ENCODE measurements at regions of chr7 and their contacts with region 1.

Region 1: GRCh38 chr7:73578342-73579127 is at the start of gene TBL2:
- DNase-seq: peak; percentile 97
- H3K4me3 Mint-ChIP-seq: peak within 1 kb of the TSS; percentile 92
- H3K27ac Mint-ChIP-seq: peak within 1 kb of the TSS; percentile 97
- H3K4me1 Mint-ChIP-seq: peaks cover 15% of the 10 kb centered on the region
- H3K27me3 Mint-ChIP-seq: no peaks in the 10 kb centered on the region
- total RNA-seq, gene TBL2: 43.3 and 43.9 TPM in 2 replicates

Region 2: DNA sequence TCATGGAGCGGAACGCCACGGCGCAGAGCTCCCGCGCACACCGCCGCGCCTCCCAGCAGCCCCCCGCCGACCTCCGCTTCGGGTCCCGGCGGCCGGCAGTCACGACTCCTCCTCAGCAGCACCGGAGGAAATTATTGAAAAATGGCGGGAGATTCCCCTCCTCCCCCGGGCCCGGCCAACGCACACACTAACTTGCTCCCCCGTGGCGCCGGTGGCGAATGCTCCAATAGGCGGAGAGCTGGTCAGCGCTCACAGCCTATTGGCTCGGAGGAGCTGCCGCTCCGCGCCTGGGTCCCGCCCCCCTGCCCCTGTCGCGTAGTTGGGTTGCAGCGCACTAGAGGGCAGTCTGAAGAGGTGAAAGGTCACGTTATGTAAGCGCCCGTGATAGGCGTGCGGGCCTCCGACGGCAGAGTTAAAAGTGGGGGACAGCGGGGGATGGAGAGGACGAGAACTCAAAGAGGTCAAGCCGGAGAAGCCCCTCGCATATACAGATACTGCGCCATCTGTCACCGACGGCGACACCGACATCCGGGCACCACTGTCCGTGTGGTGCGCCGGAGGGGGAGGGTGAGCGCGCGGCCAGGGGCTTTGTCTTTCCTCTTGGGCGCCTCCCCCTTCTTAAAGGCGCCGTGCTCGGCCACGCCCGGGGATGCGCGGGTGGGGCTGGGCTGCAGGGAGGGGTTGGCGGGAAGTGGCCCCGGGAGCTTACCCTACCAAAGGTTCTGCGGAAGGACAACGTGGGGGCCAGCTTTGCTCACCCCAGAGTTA is 56.2 kb before region 1 on chr7 and contains the start of gene BAZ1B:
- intact Hi-C with region 1: loop called (anchors 1 kb)
- DNase-seq: peak; percentile 95
- H3K4me3 Mint-ChIP-seq: peak within 1 kb of the TSS; percentile 98
- H3K27ac Mint-ChIP-seq: peak within 1 kb of the TSS; percentile 94
- H3K4me1 Mint-ChIP-seq: peaks cover 52% of the 10 kb centered on the region
- H3K27me3 Mint-ChIP-seq: no peaks in the 10 kb centered on the region
- total RNA-seq, gene BAZ1B: 99.6 and 101 TPM in 2 replicates

Region 3: DNA sequence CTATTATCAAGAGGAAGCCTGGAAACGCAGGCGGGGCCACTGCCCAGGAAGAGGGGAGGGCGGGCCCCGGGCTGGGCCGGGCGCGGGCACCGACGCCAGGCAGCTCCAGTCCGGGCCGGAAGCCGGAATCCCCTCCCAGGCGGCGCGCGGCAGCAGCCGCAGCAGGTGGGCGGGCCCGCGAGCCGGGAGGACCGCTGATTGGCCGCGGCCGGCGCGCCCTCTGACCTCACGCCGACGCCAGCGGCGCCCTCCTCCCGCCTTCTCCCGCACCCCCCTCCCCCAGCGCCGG is 21.5 kb before region 1 on chr7:
- intact Hi-C with region 1: loop called (anchors 1 kb)
- DNase-seq: peak; percentile 90
- H3K4me3 Mint-ChIP-seq: peak overlapping the region; percentile 88
- H3K27ac Mint-ChIP-seq: peak overlapping the region; percentile 90
- H3K4me1 Mint-ChIP-seq: peaks cover 36% of the 10 kb centered on the region
- H3K27me3 Mint-ChIP-seq: no peaks in the 10 kb centered on the region

Region 4: DNA sequence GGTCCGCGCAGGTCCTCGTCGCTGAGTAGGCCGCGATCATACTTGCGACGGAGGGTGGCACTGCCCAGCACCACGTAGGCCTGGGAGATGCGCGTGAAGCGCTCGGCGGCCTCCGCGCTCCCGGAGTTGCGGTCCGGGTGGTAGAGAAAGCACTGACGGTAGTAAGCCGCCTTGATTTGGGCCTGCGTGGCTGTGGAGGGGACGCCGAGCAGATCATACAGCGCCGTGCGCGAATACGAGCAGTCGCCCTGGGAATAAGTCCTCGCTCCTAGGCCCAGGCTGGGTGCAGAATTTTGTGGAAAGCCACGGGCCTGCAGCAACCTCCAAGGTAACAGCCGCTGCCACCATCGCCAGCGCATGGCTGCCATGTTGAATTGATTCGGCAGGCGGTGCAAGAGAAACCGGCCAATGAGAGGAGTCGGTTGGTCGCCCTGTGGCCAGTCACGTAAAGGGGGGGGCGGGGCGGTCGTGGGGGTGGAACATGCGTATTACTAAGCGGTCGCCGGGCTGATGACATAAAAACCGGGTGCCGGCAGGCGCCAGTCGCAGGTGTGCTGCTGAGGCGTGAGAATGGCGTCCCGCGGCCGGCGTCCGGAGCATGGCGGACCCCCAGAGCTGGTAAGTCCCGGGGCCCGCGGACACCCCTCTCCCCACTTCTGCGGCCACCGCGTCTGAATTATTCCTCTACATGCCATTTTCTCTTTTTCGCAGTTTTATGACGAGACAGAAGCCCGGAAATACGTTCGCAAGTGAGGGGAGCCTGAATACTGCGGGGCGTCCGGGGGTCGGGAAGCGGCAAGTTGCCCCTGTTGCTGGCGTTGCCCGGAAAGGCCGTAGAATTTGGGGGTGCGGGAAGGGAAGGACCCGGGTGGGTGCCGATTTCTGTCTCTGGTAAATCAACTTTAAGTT is 104.8 kb after region 1 on chr7 and contains the starts of genes BUD23 and DNAJC30:
- intact Hi-C with region 1: loop called (anchors 5 kb)
- DNase-seq: peak; percentile 88
- H3K4me3 Mint-ChIP-seq: peak within 1 kb of the TSS; percentile 97
- H3K27ac Mint-ChIP-seq: peak within 1 kb of the TSS; percentile 97
- H3K4me1 Mint-ChIP-seq: peaks cover 21% of the 10 kb centered on the region
- H3K27me3 Mint-ChIP-seq: no peaks in the 10 kb centered on the region
- total RNA-seq, gene BUD23: 96.0 and 109 TPM in 2 replicates
- total RNA-seq, gene DNAJC30: 9.2 TPM in 2 replicates

Region 5: GRCh38 chr7:73718905-73719805 is 140.6 kb after region 1 on chr7 and contains the start of gene STX1A:
- intact Hi-C with region 1: loop called (anchors 5 kb)
- DNase-seq: peak; percentile 71
- H3K4me3 Mint-ChIP-seq: peak within 1 kb of the TSS; percentile 89
- H3K27ac Mint-ChIP-seq: peak within 1 kb of the TSS; percentile 62
- H3K4me1 Mint-ChIP-seq: peaks cover 31% of the 10 kb centered on the region
- H3K27me3 Mint-ChIP-seq: peaks cover 9% of the 10 kb centered on the region
- total RNA-seq, gene STX1A: 17.2 and 17.6 TPM in 2 replicates

Region 6: DNA sequence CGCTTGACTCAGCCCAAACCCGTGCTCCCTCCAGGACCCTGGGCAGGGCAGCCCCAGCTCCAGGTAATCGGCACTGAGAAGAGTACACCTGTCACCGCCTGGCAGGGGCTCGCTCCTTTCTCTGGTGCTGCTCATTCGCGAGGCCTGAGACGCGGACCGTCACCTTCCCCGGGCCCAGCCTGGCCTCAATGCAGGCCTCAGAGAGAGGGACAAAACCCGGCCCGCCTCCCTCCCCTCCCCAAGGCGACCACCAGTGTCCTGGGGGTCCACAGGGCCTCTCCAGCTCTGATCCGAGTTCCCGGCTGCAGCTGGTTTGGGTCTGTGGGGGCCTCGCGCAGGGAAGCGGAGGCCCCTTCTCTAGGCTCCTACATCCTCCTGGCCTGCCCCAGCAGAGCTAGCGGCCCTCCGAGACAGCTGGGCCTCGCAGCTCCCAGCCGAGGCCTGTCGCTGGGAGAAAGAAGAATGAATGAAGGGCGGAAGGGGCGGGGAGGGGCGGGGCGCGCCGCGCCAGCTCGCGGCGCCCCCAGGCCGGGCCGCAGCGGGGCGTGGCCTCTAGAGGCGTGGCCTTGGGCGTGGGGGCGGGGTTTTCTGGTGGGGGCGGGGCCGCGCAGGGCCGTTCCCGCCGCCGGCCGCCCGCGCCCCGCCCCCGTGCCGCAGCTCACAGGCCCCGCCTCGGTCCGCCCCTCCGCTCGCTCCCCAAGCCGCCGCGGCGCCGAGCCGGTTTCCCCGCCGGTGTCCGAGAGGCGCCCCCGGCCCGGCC is 504.8 kb after region 1 on chr7 and contains the start of gene LIMK1:
- intact Hi-C with region 1: no loop called
- DNase-seq: peak; percentile 80
- H3K4me3 Mint-ChIP-seq: peak within 1 kb of the TSS; percentile 87
- H3K27ac Mint-ChIP-seq: peak within 1 kb of the TSS; percentile 84
- H3K4me1 Mint-ChIP-seq: peaks cover 9% of the 10 kb centered on the region
- H3K27me3 Mint-ChIP-seq: peaks cover 6% of the 10 kb centered on the region
- total RNA-seq, gene LIMK1: 29.6 and 34.4 TPM in 2 replicates